ENCODE measurements at regions of chr5 and their contacts with region 1.

Region 1: DNA sequence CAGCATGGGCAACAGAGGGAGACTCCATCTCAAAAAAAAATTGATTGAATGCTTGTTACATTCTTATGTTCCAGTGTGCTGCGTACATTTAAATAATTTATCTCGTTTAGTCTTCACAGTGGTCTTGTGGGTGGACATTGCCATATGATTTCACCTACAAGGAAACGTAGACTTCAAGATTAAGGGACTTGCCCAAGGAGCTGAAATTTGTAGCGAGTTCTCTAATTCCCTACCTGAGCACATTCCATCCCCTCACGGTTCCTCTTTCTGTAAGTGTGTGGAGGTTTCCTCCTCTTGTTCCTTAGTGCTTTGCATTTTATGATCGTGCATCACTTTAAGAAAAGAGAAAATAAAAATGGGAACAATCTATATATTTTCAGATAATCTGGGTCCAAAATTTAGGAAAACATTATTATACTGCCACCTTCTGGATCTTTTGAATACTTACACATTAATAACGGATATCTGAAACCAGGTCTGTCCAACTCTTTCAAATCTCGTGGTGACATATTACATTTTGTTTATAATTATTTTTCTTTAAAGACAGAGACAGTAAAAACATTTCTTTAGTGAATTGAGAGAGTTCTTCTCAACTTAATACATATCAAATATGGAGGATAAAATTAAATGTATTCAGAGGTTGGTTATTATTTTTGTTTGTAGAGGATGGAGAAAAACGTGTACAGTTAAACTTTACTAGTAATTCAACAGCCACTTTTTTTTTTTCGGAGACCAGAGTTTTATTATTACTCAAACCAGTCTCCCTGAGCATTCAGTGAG is 29.9 kb upstream of the C7 start:
- DNase-seq: no peak
- H3K4me3 Mint-ChIP-seq: no peak overlapping the region
- H3K27ac Mint-ChIP-seq: no peak overlapping the region
- H3K4me1 Mint-ChIP-seq: no peaks in the 10 kb centered on the region
- H3K27me3 Mint-ChIP-seq: no peaks in the 10 kb centered on the region
- CTCF ChIP-seq: peak; percentile 30

Region 2: DNA sequence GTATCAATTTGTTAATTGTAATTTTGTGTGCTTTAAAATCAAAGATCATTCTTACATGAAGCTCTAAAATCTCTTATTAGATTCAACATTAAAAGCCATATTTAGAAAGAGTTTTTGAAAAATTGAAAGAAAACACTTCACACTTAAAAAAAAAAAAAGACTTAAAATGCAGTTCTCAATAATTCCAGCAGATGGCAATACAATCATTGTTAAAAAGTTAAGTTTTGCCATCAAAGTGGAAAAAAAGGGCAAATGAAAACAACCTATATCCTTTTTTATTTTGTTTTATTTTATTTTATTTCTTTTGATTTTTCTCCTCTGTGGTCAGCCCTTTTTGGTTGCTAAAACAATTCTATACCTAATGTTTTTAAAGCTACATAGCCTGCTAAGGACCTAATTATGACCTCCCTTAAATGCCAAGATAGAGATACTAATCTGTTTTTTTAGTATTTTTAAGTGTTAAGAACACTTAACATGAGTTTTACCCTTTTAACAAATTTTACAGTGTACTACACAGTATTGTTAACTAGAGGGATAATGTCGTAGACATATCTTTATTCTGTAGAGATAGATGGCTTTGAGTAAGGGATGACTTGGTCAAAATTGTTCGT is 1300.4 kb before region 1 on chr5:
- CTCF ChIA-PET with region 1: no interaction called
- intact Hi-C with region 1: loop called (anchors 5 kb)
- DNase-seq: no peak
- H3K4me3 Mint-ChIP-seq: no peak overlapping the region
- H3K27ac Mint-ChIP-seq: no peak overlapping the region
- H3K4me1 Mint-ChIP-seq: peaks cover 18% of the 10 kb centered on the region
- H3K27me3 Mint-ChIP-seq: no peaks in the 10 kb centered on the region
- CTCF ChIP-seq: peak; percentile 42

Region 3: DNA sequence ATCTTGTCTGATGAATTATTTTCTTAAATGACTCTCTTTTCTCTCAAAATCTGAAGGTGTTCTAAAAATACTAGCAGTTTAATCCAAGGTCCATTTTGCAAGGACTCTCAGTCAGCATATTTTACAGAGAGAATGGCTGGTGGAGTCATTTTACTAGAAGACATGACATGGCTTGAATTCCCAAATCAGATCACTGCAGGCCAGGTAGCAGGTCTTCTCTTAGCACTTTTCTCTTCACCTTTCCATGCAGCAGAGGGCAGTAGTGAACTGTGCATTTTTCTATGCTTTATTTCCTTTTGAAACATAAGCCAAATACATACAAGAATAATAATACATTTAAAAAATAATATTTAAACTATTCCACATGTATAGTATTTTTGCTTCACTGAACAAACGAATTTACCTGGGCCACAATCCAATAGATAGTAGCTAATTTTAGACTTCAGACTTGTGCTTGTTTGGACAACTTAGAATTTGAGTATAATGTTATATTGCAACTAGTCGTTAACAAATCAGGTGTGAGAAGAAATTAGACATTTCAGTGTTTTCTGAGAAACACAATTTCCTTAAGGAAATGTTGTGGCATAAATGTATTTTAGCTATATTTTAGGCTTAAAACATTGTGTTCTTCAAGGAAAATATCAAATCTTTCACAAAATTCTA is 1165.2 kb before region 1 on chr5:
- CTCF ChIA-PET with region 1: no interaction called
- intact Hi-C with region 1: loop called (anchors 10 kb)
- DNase-seq: peak; percentile 61
- H3K4me3 Mint-ChIP-seq: no peak overlapping the region
- H3K27ac Mint-ChIP-seq: no peak overlapping the region
- H3K4me1 Mint-ChIP-seq: peaks cover 31% of the 10 kb centered on the region
- H3K27me3 Mint-ChIP-seq: no peaks in the 10 kb centered on the region
- CTCF ChIP-seq: peak; percentile 52

Region 4: GRCh38 chr5:40755407-40756365 is 123.7 kb before region 1 on chr5 and contains the start of gene TTC33:
- CTCF ChIA-PET with region 1: no interaction called
- intact Hi-C with region 1: loop called (anchors 1 kb)
- DNase-seq: peak; percentile 95
- H3K4me3 Mint-ChIP-seq: no peak within 1 kb of the TSS
- H3K27ac Mint-ChIP-seq: no peak within 1 kb of the TSS
- H3K4me1 Mint-ChIP-seq: no peaks in the 10 kb centered on the region
- H3K27me3 Mint-ChIP-seq: no peaks in the 10 kb centered on the region
- CTCF ChIP-seq: peak; percentile 45
- total RNA-seq, gene TTC33: 11.3 and 14.0 TPM in 2 replicates

Region 5: GRCh38 chr5:40834849-40835787 is 44.2 kb before region 1 on chr5 and contains the start of gene RPL37:
- CTCF ChIA-PET with region 1: no interaction called
- intact Hi-C with region 1: loop called (anchors 2 kb)
- DNase-seq: peak; percentile 93
- H3K4me3 Mint-ChIP-seq: peak within 1 kb of the TSS; percentile 89
- H3K27ac Mint-ChIP-seq: peak within 1 kb of the TSS; percentile 98
- H3K4me1 Mint-ChIP-seq: peaks cover 21% of the 10 kb centered on the region
- H3K27me3 Mint-ChIP-seq: no peaks in the 10 kb centered on the region
- CTCF ChIP-seq: no peak
- total RNA-seq, gene RPL37: 984 and 1,038 TPM in 2 replicates

Measured in Calu3 (cell line).